Left ventricle myocardium inferior (tissue), 1 donor: ENCODE measurements at regions of chr3 and their contacts with region 1.

Region 1: GRCh38 chr3:194682694-194683310 is 2.9 kb upstream of the FAM43A start:
- DNase-seq: peak; percentile 59
- H3K4me3 ChIP-seq: no peak overlapping the region
- H3K27ac ChIP-seq: peak overlapping the region; percentile 20
- H3K4me1 ChIP-seq: peaks cover 43% of the 10 kb centered on the region
- H3K27me3 ChIP-seq: no peaks in the 10 kb centered on the region
- CTCF ChIP-seq: peak; percentile 89

Region 2: DNA sequence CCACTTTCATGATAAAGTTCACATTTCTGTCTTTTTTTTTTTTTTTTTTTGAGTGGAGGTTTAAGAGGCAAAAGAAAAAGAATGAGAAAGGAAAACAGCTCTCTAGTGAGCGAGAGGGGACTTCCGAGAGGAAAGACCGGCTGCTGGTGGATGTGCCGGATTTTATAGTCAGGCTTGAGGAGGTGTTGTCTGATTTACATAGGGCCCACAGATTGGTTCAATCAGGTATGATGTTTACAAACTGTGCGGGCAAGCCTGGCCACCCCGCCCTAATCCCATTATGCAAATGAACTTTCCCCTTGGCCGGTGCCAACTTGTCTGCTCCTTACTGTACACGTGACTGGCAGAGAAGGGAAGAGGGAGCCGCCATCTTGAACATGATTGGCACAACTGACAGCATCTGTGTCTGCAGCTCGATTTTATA is 47.5 kb after region 1 on chr3:
- intact Hi-C with region 1: no loop called
- DNase-seq: no peak
- H3K4me3 ChIP-seq: no peak overlapping the region
- H3K27ac ChIP-seq: no peak overlapping the region
- H3K4me1 ChIP-seq: no peaks in the 10 kb centered on the region
- H3K27me3 ChIP-seq: no peaks in the 10 kb centered on the region
- CTCF ChIP-seq: no peak

Region 3: GRCh38 chr3:195030791-195031321 is 348.1 kb after region 1 on chr3:
- intact Hi-C with region 1: no loop called
- DNase-seq: no peak
- H3K4me3 ChIP-seq: no peak overlapping the region
- H3K27ac ChIP-seq: peak overlapping the region; percentile 72
- H3K4me1 ChIP-seq: peaks cover 40% of the 10 kb centered on the region
- H3K27me3 ChIP-seq: no peaks in the 10 kb centered on the region
- CTCF ChIP-seq: no peak

Region 4: DNA sequence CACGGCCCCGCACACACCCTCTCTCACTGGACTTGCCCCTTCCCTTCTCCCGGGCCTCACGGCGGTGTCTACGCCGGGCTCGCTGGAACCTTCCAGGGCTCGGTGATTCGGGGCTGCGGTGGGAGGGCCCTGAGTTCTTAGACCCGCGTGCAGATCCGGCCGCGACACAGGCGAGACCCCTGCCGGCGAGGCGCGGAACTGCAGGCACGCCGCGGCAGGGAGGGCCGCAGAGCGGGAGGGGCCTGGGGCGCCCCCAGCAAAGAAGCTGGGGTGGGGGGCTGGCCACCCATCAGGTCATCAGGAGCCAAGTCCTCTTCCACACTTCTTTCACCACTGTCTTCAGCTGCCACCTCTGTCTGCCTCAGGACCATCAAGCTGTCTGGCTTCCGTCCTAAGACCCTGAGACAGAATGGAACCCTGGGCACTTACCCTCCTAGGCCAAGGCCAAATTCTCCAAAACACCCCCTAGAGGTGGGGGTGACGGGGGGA is 423.7 kb after region 1 on chr3:
- intact Hi-C with region 1: loop called (anchors 5 kb)
- DNase-seq: peak; percentile 74
- H3K4me3 ChIP-seq: peak overlapping the region; percentile 52
- H3K27ac ChIP-seq: no peak overlapping the region
- H3K4me1 ChIP-seq: peaks cover 33% of the 10 kb centered on the region
- H3K27me3 ChIP-seq: no peaks in the 10 kb centered on the region
- CTCF ChIP-seq: peak; percentile 100

Region 5: DNA sequence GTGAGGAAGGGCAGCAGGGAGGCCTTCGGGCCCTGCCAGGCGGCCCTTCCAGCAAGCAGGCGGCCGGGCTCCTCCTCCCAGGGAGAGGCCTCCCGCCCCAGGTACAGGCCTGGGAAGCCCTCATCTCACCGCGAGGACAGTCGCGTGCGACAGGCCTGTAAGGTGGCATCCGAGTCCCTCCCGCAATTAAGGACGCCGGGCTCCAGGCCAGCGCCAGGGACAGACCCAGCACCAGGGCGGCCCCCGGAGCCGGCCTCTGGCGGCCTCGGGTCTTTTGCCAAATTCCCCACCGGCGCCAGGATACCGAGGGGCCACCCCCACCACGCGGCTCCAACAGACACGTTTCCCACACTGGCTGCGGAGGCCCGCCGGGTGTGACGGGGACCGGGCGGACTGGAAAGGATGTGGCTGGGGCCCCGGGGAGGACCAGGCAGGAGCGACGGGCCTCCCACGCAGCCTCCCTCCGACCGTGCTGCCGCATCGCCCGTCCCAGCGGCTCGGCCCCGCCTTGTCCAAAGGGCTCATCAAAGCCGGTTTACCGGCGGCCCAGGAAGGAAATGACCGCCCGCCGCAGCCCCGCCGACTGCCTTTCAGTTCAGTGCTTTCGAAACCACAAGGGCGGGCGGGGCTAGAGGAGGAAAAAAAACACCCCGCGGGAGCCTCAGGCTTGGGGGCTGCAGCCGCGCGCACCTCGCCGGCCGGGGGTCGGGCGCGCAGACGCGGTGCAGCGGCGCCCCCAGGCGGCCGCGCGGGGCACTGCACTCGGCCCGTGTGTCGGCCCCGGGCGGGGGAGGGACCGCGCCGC is 576.9 kb after region 1 on chr3:
- intact Hi-C with region 1: loop called (anchors 5 kb)
- DNase-seq: peak; percentile 91
- H3K4me3 ChIP-seq: peak overlapping the region; percentile 79
- H3K27ac ChIP-seq: peak overlapping the region; percentile 94
- H3K4me1 ChIP-seq: peaks cover 32% of the 10 kb centered on the region
- H3K27me3 ChIP-seq: no peaks in the 10 kb centered on the region
- CTCF ChIP-seq: peak; percentile 88

Region 6: DNA sequence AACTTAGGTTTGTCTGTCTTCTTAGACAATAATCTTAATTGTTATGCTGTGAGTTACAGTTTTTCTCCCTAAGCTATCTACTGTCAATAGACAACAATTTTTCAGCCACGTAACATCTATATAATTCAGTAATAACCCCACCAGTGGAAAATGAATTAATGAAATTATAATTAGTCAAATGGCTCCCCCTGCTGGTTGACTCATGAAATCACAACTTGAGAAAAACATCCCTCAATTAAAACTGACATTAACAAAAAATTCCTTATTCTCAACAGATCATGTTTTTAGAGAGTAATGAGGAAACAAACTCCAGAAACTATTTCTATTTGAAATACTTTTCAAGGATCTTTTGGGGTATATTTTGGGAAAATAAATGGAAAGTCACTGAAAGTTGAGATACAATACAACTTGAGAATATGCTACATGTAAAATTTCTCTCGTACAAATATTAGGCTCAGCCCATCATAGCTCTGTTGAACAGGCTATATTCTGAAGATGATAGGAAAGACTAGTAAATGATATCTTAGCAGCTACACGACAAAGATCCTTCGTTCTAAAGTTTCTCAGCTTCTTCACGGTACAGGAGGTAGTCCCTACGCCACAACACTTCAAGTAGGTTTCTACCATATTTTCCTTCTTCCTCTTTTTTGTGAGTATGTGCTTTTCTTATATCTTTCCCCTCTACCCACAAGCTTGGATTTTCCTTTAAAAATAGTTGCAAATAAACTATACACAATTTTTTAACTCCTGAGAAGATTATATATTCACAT is 839.6 kb after region 1 on chr3:
- intact Hi-C with region 1: loop called (anchors 10 kb)
- DNase-seq: no peak
- H3K4me3 ChIP-seq: no peak overlapping the region
- H3K27ac ChIP-seq: no peak overlapping the region
- H3K4me1 ChIP-seq: peaks cover 6% of the 10 kb centered on the region
- H3K27me3 ChIP-seq: no peaks in the 10 kb centered on the region
- CTCF ChIP-seq: peak; percentile 82

Region 7: DNA sequence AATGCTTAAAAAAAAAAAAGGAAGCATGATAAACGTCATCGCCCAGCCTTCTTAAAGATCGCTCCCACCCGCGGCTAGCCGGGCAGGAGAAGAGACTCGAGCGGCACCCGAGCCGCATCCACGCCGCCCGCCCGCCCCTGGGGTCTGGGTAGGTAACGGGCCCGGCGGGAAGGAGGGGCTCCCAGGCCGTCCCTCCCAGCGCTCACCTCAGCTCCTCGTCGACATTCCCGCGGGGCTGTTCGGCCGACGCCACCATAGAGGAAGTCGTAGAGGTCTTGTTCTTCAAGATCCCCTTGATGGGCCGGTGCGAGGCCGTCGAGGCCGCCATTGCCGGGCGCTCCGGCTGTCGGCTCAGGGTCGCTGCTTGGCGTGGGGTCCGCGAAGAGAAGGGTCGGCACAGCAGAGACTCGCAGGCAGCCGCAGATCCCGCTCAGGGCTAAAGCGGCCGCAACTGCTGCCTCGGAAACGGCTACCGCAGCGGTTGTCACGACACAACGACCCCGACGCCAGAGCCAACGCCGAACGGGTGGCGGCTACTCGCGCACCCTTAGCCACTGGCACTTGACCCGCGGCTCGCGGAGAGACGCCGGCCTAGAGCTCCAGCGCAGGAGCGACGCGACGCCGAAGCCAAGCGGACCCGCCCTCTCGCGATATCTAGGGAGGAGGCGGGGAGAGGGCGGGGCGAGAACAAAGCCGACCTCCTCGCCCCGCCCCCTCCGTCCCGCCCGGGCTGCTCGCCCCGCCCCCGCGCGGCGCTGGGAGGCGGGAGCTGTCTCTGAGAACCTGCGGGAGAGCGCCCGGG is 860.1 kb after region 1 on chr3 and contains the start of gene PPP1R2:
- intact Hi-C with region 1: no loop called
- DNase-seq: peak; percentile 92
- H3K4me3 ChIP-seq: peak within 1 kb of the TSS; percentile 86
- H3K27ac ChIP-seq: peak within 1 kb of the TSS; percentile 94
- H3K4me1 ChIP-seq: peaks cover 87% of the 10 kb centered on the region
- H3K27me3 ChIP-seq: no peaks in the 10 kb centered on the region
- CTCF ChIP-seq: no peak
- total RNA-seq, gene PPP1R2: 39.7 TPM